Activated CD4-positive, alpha-beta T cell treated with anti-CD3 and anti-CD28 coated beads, Interleukin-2, amount 10 ng/mL, durations not matched to agents 7 days and 5 days (primary cell): ENCODE measurements at regions of chr16 and their contacts with region 1.

Region 1: GRCh38 chr16:31142109-31143010 is 6.8 kb upstream of the PRSS8 start:
- DNase-seq: peak; percentile 98
- H3K4me3 Mint-ChIP-seq: peak overlapping the region; percentile 69
- H3K27ac Mint-ChIP-seq: peak overlapping the region; percentile 86
- H3K4me1 Mint-ChIP-seq: peaks cover 27% of the 10 kb centered on the region
- H3K27me3 Mint-ChIP-seq: peaks cover 2% of the 10 kb centered on the region

Region 2: GRCh38 chr16:30949650-30950515 is 192.5 kb before region 1 on chr16:
- CTCF ChIA-PET with region 1: interaction called, 12 read pairs
- POLR2A ChIA-PET with region 1: no interaction called
- DNase-seq: peak; percentile 58
- H3K4me3 Mint-ChIP-seq: peak overlapping the region; percentile 91
- H3K27ac Mint-ChIP-seq: peak overlapping the region; percentile 85
- H3K4me1 Mint-ChIP-seq: peaks cover 32% of the 10 kb centered on the region
- H3K27me3 Mint-ChIP-seq: no peaks in the 10 kb centered on the region

Region 3: GRCh38 chr16:31002250-31002700 is 140.1 kb before region 1 on chr16:
- CTCF ChIA-PET with region 1: interaction called, 10 read pairs
- POLR2A ChIA-PET with region 1: no interaction called
- DNase-seq: no peak
- H3K4me3 Mint-ChIP-seq: no peak overlapping the region
- H3K27ac Mint-ChIP-seq: no peak overlapping the region
- H3K4me1 Mint-ChIP-seq: no peaks in the 10 kb centered on the region
- H3K27me3 Mint-ChIP-seq: peaks cover 14% of the 10 kb centered on the region

Region 4: GRCh38 chr16:31099860-31100638 is 42.3 kb before region 1 on chr16:
- CTCF ChIA-PET with region 1: interaction called, 10 read pairs
- POLR2A ChIA-PET with region 1: no interaction called
- DNase-seq: no peak
- H3K4me3 Mint-ChIP-seq: no peak overlapping the region
- H3K27ac Mint-ChIP-seq: no peak overlapping the region
- H3K4me1 Mint-ChIP-seq: peaks cover 10% of the 10 kb centered on the region
- H3K27me3 Mint-ChIP-seq: no peaks in the 10 kb centered on the region

Region 5: GRCh38 chr16:31128711-31129567 is 13.4 kb before region 1 on chr16:
- CTCF ChIA-PET with region 1: interaction called, 47 read pairs
- POLR2A ChIA-PET with region 1: no interaction called
- DNase-seq: no peak
- H3K4me3 Mint-ChIP-seq: no peak overlapping the region
- H3K27ac Mint-ChIP-seq: peak overlapping the region; percentile 88
- H3K4me1 Mint-ChIP-seq: peaks cover 9% of the 10 kb centered on the region
- H3K27me3 Mint-ChIP-seq: no peaks in the 10 kb centered on the region

Region 6: DNA sequence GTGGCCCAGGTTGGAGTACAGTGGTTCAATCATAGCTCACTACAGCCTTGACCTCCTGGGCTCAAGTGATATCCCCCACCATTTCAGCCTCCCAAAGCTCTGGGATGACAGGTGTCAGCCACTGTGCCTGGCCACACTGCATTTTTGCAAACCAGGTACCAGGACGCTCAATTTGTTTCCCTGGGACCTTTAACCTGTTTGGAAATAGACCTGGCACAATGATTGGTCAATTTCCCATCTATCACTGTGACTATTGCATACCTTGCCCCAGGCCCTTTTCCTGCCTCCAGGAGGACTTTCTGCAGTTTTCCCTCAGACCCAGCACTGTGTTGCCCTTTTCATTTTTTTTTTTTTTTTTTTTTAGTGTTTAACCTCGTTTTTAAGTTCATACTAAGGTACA is 26.5 kb after region 1 on chr16:
- CTCF ChIA-PET with region 1: interaction called, 11 read pairs
- POLR2A ChIA-PET with region 1: no interaction called
- DNase-seq: no peak
- H3K4me3 Mint-ChIP-seq: no peak overlapping the region
- H3K27ac Mint-ChIP-seq: no peak overlapping the region
- H3K4me1 Mint-ChIP-seq: no peaks in the 10 kb centered on the region
- H3K27me3 Mint-ChIP-seq: peaks cover 2% of the 10 kb centered on the region